B cell (primary cell): ENCODE measurements at regions of chrX and their contacts with region 1.

Region 1: DNA sequence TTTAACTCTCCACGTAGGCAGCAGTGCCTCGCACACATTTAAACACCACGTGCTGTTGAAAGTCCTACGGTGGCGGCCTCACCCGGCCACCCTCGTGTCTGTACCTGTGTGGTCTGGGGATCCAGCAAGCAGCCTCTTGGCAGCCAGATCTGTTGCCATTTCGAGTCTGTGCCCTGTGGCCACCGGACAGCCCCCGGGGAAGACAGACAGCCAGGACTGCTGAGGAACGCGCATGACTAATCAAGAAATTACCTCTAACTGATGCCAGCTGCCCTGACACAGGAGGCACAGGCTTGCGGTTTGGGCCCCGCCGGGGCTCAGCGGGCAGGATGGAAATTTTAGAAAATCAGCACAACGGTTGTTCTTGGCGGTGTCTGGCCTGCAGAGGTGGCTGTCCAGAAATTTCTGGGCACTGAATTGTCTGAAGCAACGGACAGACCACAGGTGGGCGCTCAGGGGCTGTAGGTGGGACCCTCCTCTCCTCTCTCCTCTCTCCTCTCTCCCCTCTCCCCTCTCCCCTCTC is 15.6 kb upstream of the ASMTL start:
- DNase-seq: peak; percentile 86
- ATAC-seq: peak; percentile 67
- H3K4me3 ChIP-seq: no peak overlapping the region
- H3K4me3 Mint-ChIP-seq: peak overlapping the region; percentile 80
- H3K27ac ChIP-seq: peak overlapping the region; percentile 69 to 84
- H3K27ac Mint-ChIP-seq: peak overlapping the region; percentile 95
- H3K4me1 ChIP-seq: peaks cover 68 to 86% of the 10 kb centered on the region in 2 donors
- H3K4me1 Mint-ChIP-seq: peaks cover 68% of the 10 kb centered on the region
- H3K27me3 ChIP-seq: no peaks in the 10 kb centered on the region
- H3K27me3 Mint-ChIP-seq: no peaks in the 10 kb centered on the region
- CTCF ChIP-seq: peak; percentile 25

Region 2: DNA sequence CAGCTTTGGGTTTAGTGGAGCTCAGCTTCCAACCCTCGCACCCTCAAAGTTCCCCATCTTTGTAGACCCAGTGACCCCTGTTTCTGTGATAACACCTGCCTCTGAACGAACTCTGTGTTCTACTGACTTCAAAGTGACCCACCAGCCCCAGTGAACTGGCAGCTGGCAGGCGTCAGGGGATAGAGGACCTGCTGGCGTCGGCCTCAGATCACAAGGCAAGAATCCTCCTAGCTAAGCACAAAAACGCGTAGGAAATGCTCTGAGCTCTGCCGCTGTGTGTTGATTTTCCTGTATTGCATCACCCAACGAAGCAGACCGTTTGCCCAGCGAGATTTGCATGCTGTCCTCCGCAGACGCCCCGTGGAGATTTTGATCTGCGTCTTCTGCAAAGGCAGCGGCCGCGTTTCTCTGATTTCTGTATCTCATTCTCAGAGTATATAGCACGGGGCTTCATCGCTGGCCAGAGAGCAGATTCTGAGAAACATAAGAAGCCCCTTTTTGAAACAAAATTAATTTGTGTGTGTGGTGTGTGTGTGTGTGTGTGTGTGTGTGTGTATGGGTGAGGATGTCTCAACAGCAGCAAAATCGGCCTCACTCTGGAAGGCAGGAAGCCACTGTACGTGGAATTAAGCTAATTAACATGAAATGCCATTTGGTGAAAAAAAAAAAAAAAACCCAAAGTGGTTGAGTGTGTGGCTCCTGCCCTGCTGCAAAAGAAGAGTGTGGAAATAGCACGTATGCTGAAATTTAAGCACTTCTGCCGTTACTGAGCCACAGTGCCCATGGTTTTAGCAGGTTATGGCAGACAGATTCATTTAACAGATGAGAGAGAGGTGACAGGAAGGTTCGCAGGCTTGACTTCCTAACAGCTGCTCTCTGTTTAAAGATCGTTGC is 13.6 kb after region 1 on chrX:
- CTCF ChIA-PET with region 1: no interaction called
- POLR2A ChIA-PET with region 1: no interaction called
- intact Hi-C with region 1: loop called (anchors 1 kb)
- DNase-seq: peak; percentile 88
- ATAC-seq: peak; percentile 75
- H3K4me3 ChIP-seq: peak overlapping the region in 4 of 5 experiments; percentile 19 to 45 (median 26)
- H3K4me3 Mint-ChIP-seq: peak overlapping the region; percentile 80
- H3K27ac ChIP-seq: peak overlapping the region; percentile 68 to 89
- H3K27ac Mint-ChIP-seq: peak overlapping the region; percentile 98
- H3K4me1 ChIP-seq: peaks cover 44 to 72% of the 10 kb centered on the region in 2 donors
- H3K4me1 Mint-ChIP-seq: peaks cover 74% of the 10 kb centered on the region
- H3K27me3 ChIP-seq: no peaks in the 10 kb centered on the region
- H3K27me3 Mint-ChIP-seq: no peaks in the 10 kb centered on the region
- CTCF ChIP-seq: no peak

Region 3: GRCh38 chrX:1511829-1512228 is 43.5 kb after region 1 on chrX:
- CTCF ChIA-PET with region 1: no interaction called
- POLR2A ChIA-PET with region 1: no interaction called
- intact Hi-C with region 1: no loop called
- DNase-seq: no peak
- ATAC-seq: no peak
- H3K4me3 ChIP-seq: no peak overlapping the region
- H3K4me3 Mint-ChIP-seq: no peak overlapping the region
- H3K27ac ChIP-seq: peak overlapping the region in 1 of 2 donors; percentile 33
- H3K27ac Mint-ChIP-seq: peak overlapping the region; percentile 84
- H3K4me1 ChIP-seq: peaks cover 30 to 33% of the 10 kb centered on the region in 2 donors
- H3K4me1 Mint-ChIP-seq: peaks cover 26% of the 10 kb centered on the region
- H3K27me3 ChIP-seq: no peaks in the 10 kb centered on the region
- H3K27me3 Mint-ChIP-seq: no peaks in the 10 kb centered on the region
- CTCF ChIP-seq: no peak

Region 4: DNA sequence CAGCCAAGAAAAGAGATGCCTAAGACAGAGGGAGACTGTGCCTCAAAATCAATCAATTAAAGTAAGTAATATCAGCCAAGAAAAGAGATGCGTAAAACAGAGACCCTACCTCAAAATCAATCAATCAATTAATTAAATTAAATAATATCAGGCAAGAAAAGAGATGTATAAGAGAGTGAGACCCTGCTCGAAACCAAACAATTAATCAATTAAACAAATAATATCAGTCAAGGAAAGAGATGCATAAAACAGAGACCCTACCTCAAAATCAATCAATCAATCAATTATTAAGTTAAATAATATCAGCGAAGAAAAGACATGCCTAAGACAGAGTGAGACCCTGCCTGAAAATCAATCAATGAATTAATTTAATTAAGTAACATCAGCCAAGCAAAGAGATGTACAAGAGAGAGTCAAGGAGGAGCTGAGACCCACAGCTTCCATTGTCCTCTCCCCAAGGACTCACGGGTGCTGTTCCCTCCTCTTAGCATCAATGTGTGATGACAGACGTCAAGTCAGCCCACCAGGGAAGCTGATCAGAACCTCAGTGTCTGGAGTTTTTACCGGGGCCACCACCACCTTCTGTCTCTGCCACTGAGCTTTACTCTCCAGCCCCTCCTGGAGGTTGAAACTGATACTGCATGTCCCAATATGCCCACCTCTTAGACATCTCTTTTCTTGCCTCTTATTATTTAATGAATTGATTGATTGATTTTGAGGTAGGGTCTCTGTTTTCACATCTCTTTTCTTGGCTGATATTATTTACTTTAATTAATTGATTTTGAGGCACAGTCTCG is 112.6 kb after region 1 on chrX:
- CTCF ChIA-PET with region 1: no interaction called
- POLR2A ChIA-PET with region 1: no interaction called
- intact Hi-C with region 1: loop called (anchors 5 kb)
- DNase-seq: peak; percentile 77
- ATAC-seq: peak; percentile 78
- H3K4me3 ChIP-seq: no peak overlapping the region
- H3K4me3 Mint-ChIP-seq: no peak overlapping the region
- H3K27ac ChIP-seq: no peak overlapping the region
- H3K27ac Mint-ChIP-seq: peak overlapping the region; percentile 37
- H3K4me1 ChIP-seq: peaks cover 8 to 20% of the 10 kb centered on the region in 2 donors
- H3K4me1 Mint-ChIP-seq: peaks cover 25% of the 10 kb centered on the region
- H3K27me3 ChIP-seq: no peaks in the 10 kb centered on the region
- H3K27me3 Mint-ChIP-seq: no peaks in the 10 kb centered on the region
- CTCF ChIP-seq: peak; percentile 82